SK-N-SH (cell line): ENCODE measurements at regions of chr11 and their contacts with region 1.

Region 1: GRCh38 chr11:93169950-93170561 is 27.7 kb downstream of the SLC36A4 start:
- DNase-seq: peak; percentile 13
- H3K4me3 ChIP-seq: no peak overlapping the region
- H3K27ac ChIP-seq: no peak overlapping the region
- H3K4me1 ChIP-seq: no peaks in the 10 kb centered on the region; a peak in 1 of 4 replicates
- H3K27me3 ChIP-seq: no peaks in the 10 kb centered on the region
- CTCF ChIP-seq: peak; percentile 67
- EP300 ChIP-seq: no peak
- RAD21 ChIP-seq: peak; percentile 66

Region 2: DNA sequence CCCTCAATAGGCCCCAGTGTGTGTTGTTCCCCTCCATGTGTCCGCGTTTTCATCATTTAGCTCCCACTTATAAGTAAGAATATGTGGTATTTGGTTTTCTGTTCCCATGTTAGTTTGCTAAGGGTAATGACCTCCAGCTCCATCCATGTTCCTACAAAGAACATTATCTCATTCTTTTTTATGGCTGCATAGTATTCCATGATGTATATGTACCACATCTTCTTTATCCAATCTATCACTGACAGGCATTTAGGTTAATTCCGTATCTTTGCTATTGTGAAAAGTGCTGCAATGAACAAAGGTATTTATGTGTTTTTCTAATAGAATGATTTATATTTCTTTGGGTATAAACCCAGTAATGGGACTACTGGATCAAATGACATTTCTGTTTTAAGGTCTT is 14.3 kb before region 1 on chr11:
- CTCF ChIA-PET with region 1: interaction called, 19 read pairs
- POLR2A ChIA-PET with region 1: no interaction called
- DNase-seq: no peak
- H3K4me3 ChIP-seq: no peak overlapping the region
- H3K27ac ChIP-seq: no peak overlapping the region
- H3K4me1 ChIP-seq: no peaks in the 10 kb centered on the region; a peak in 1 of 4 replicates
- H3K27me3 ChIP-seq: no peaks in the 10 kb centered on the region
- CTCF ChIP-seq: no peak
- EP300 ChIP-seq: no peak
- RAD21 ChIP-seq: no peak

Region 3: GRCh38 chr11:93192163-93192562 is 22.1 kb after region 1 on chr11:
- CTCF ChIA-PET with region 1: interaction called, 11 read pairs
- POLR2A ChIA-PET with region 1: no interaction called
- DNase-seq: peak; percentile 28
- H3K4me3 ChIP-seq: no peak overlapping the region
- H3K27ac ChIP-seq: peak overlapping the region in 1 of 2 experiments; percentile 24; a peak in 2 of 4 replicates
- H3K4me1 ChIP-seq: peaks cover 0 to 17% of the 10 kb centered on the region in 2 experiments; a peak in 2 of 4 replicates
- H3K27me3 ChIP-seq: no peaks in the 10 kb centered on the region
- CTCF ChIP-seq: no peak
- EP300 ChIP-seq: no peak
- RAD21 ChIP-seq: no peak

Region 4: GRCh38 chr11:93267383-93267782 is 97.3 kb after region 1 on chr11:
- CTCF ChIA-PET with region 1: no interaction called
- POLR2A ChIA-PET with region 1: no interaction called
- DNase-seq: no peak
- H3K4me3 ChIP-seq: no peak overlapping the region
- H3K27ac ChIP-seq: no peak overlapping the region
- H3K4me1 ChIP-seq: no peaks in the 10 kb centered on the region
- H3K27me3 ChIP-seq: no peaks in the 10 kb centered on the region
- CTCF ChIP-seq: no peak
- EP300 ChIP-seq: no peak
- RAD21 ChIP-seq: no peak